ENCODE measurements at regions of chr16 and their contacts with region 1.

Region 1: GRCh38 chr16:56317998-56318826 is 107.1 kb downstream of the AMFR start:
- DNase-seq: peak; percentile 67 to 79 (median 72)
- H3K4me3 ChIP-seq: peak overlapping the region in 1 of 2 donors; percentile 25
- H3K4me3 Mint-ChIP-seq: peak overlapping the region; percentile 39 to 80 (median 57)
- H3K27ac ChIP-seq: no peak overlapping the region
- H3K27ac Mint-ChIP-seq: peak overlapping the region in 2 of 7 donors; percentile 32 to 36
- H3K4me1 ChIP-seq: peaks cover 6% of the 10 kb centered on the region
- H3K4me1 Mint-ChIP-seq: peaks cover 0 to 10% (median 8%) of the 10 kb centered on the region in 4 donors
- H3K27me3 ChIP-seq: no peaks in the 10 kb centered on the region
- H3K27me3 Mint-ChIP-seq: no peaks in the 10 kb centered on the region

Region 2: DNA sequence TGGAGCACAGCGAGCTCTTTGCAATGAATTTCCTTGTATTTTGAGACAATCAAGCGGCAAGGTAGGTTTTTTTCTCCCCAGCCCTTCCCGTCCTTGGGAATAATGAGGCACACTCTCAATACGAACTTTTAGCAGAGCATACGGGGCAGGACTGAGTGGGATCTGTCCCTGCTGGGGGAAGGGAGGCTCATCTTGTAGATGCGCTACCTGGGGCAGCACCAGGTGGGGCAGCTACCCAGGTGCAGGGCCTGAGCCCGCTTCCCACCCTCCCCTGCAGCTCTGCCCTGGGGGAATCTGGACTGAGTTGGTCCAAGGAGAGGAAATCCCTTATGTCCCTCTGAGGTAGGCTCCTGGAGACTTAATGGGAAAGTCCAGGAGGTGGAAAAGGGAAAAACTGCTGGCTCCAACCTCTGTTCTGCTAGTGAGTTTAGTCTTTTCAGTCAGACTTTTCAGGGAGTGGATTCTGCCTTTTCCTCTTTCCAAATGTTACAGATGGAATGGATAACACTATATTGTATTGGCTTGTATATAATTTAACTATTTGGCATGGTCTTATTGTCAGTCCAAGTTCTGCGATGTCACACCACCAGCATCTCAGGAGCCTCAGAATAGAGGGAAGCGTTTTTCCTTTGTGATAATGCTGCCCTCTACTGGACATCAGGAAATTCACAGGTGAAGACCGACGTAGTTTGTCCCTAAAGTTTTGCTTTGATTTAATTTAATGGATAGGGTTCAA is 475.7 kb before region 1 on chr16:
- CTCF ChIA-PET with region 1: interaction called, 5 read pairs
- POLR2A ChIA-PET with region 1: no interaction called
- intact Hi-C with region 1: loop called (anchors 1 kb)
- DNase-seq: peak in 4 of 5 donors; percentile 24 to 41 (median 34)
- H3K4me3 ChIP-seq: no peak overlapping the region
- H3K4me3 Mint-ChIP-seq: no peak overlapping the region
- H3K27ac ChIP-seq: no peak overlapping the region
- H3K27ac Mint-ChIP-seq: no peak overlapping the region
- H3K4me1 ChIP-seq: no peaks in the 10 kb centered on the region
- H3K4me1 Mint-ChIP-seq: peaks cover 0 to 4% (median 3%) of the 10 kb centered on the region in 4 donors
- H3K27me3 ChIP-seq: peaks cover 3% of the 10 kb centered on the region
- H3K27me3 Mint-ChIP-seq: peaks cover 11 to 13% of the 10 kb centered on the region in 2 donors

Region 3: GRCh38 chr16:55955845-55956244 is 362.4 kb before region 1 on chr16:
- CTCF ChIA-PET with region 1: interaction called, 12 read pairs
- POLR2A ChIA-PET with region 1: no interaction called
- intact Hi-C with region 1: no loop called
- DNase-seq: no peak
- H3K4me3 ChIP-seq: no peak overlapping the region
- H3K4me3 Mint-ChIP-seq: no peak overlapping the region
- H3K27ac ChIP-seq: no peak overlapping the region
- H3K27ac Mint-ChIP-seq: peak overlapping the region in 1 of 7 donors; percentile 44
- H3K4me1 ChIP-seq: no peaks in the 10 kb centered on the region
- H3K4me1 Mint-ChIP-seq: peaks cover 0 to 2% (median 0%) of the 10 kb centered on the region in 4 donors
- H3K27me3 ChIP-seq: no peaks in the 10 kb centered on the region
- H3K27me3 Mint-ChIP-seq: peaks cover 2 to 5% of the 10 kb centered on the region in 2 donors

Region 4: GRCh38 chr16:56075732-56076388 is 242.4 kb before region 1 on chr16:
- CTCF ChIA-PET with region 1: no interaction called
- POLR2A ChIA-PET with region 1: no interaction called
- intact Hi-C with region 1: no loop called
- DNase-seq: no peak
- H3K4me3 ChIP-seq: no peak overlapping the region
- H3K4me3 Mint-ChIP-seq: no peak overlapping the region
- H3K27ac ChIP-seq: no peak overlapping the region
- H3K27ac Mint-ChIP-seq: no peak overlapping the region
- H3K4me1 ChIP-seq: no peaks in the 10 kb centered on the region
- H3K4me1 Mint-ChIP-seq: no peaks in the 10 kb centered on the region
- H3K27me3 ChIP-seq: no peaks in the 10 kb centered on the region
- H3K27me3 Mint-ChIP-seq: peaks cover 3 to 6% of the 10 kb centered on the region in 2 donors

Region 5: DNA sequence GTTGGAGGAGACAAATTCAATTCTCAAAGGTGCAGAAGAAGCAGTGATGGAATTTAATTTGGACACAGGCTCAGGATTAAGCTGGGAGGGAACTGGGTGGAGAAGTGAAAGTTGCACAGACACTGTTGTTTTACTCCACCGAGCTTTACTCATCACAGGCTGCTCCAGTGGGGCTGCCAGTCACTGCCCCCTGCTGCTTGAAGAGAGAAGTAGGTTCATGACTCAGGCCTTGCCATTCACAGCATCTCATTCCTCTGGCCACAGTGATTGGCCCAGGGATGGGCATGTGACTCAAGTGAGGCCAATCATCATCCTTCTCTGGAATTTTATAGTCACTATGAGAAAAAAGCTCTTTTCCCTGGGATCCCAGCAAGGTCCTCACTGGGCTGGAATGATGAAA is 115.2 kb before region 1 on chr16:
- CTCF ChIA-PET with region 1: interaction called, 24 read pairs
- POLR2A ChIA-PET with region 1: no interaction called
- intact Hi-C with region 1: loop called (anchors 1 kb)
- DNase-seq: peak; percentile 55 to 70 (median 66)
- H3K4me3 ChIP-seq: no peak overlapping the region
- H3K4me3 Mint-ChIP-seq: no peak overlapping the region
- H3K27ac ChIP-seq: no peak overlapping the region
- H3K27ac Mint-ChIP-seq: no peak overlapping the region
- H3K4me1 ChIP-seq: peaks cover 57% of the 10 kb centered on the region
- H3K4me1 Mint-ChIP-seq: peaks cover 0 to 24% (median 9%) of the 10 kb centered on the region in 4 donors
- H3K27me3 ChIP-seq: no peaks in the 10 kb centered on the region
- H3K27me3 Mint-ChIP-seq: no peaks in the 10 kb centered on the region

Region 6: DNA sequence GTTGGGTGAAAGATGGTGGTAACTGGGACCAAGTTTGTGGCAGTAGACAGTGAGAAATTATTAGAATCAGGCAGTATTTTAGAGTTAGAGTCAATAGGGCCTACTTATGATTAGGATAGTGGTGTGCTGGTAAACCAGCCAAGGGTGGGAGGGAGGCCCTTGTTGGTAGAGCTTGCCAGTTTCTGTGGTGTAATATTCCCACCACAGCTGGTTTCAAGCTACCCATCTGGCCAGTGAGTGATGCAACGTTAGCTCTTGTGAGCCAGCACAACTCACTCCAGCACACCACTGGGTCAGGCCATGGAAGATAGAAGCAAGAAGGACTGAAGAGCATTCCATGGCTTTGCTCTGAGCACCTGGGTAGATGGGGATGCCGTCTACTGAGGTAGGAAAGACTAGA is 92.0 kb before region 1 on chr16:
- CTCF ChIA-PET with region 1: interaction called, 11 read pairs
- POLR2A ChIA-PET with region 1: no interaction called
- intact Hi-C with region 1: no loop called
- DNase-seq: no peak
- H3K4me3 ChIP-seq: no peak overlapping the region
- H3K4me3 Mint-ChIP-seq: peak overlapping the region in 7 of 8 donors; percentile 73 to 90 (median 84)
- H3K27ac ChIP-seq: no peak overlapping the region
- H3K27ac Mint-ChIP-seq: peak overlapping the region; percentile 73 to 94 (median 83)
- H3K4me1 ChIP-seq: peaks cover 38% of the 10 kb centered on the region
- H3K4me1 Mint-ChIP-seq: peaks cover 35 to 49% (median 41%) of the 10 kb centered on the region in 4 donors
- H3K27me3 ChIP-seq: no peaks in the 10 kb centered on the region
- H3K27me3 Mint-ChIP-seq: no peaks in the 10 kb centered on the region

Region 7: DNA sequence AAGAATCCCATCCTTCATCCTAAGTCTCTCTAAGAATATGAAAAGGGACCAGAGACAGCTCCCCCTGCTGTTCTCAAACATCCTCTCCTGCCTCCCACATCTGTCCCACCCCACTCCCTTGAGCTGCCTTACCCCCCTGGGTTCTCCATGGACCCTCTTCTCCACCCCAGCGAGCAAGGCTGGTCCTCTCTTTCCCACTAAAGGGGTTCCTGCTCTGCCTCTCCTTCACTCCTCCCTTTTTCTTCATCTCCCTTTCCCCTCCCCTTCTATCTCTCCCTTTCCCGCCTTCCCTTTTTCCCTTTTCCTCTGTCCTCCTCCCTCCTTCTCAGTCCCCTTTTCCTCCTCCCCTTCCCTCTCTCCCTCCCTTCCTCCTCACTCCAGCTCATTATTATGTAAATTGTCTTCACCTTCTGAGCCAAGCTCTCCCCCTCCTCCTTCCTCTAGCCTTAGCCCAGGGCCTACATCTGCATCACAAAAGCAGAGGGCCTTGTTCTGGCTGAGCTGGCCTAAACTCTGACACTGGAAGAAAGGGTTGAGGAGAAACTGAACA is 36.9 kb before region 1 on chr16:
- CTCF ChIA-PET with region 1: interaction called, 18 read pairs
- POLR2A ChIA-PET with region 1: no interaction called
- intact Hi-C with region 1: no loop called
- DNase-seq: no peak
- H3K4me3 ChIP-seq: no peak overlapping the region
- H3K4me3 Mint-ChIP-seq: no peak overlapping the region
- H3K27ac ChIP-seq: no peak overlapping the region
- H3K27ac Mint-ChIP-seq: peak overlapping the region in 4 of 7 donors; percentile 35 to 74 (median 58)
- H3K4me1 ChIP-seq: peaks cover 38% of the 10 kb centered on the region
- H3K4me1 Mint-ChIP-seq: peaks cover 26 to 44% (median 36%) of the 10 kb centered on the region in 4 donors
- H3K27me3 ChIP-seq: no peaks in the 10 kb centered on the region
- H3K27me3 Mint-ChIP-seq: no peaks in the 10 kb centered on the region

Region 8: DNA sequence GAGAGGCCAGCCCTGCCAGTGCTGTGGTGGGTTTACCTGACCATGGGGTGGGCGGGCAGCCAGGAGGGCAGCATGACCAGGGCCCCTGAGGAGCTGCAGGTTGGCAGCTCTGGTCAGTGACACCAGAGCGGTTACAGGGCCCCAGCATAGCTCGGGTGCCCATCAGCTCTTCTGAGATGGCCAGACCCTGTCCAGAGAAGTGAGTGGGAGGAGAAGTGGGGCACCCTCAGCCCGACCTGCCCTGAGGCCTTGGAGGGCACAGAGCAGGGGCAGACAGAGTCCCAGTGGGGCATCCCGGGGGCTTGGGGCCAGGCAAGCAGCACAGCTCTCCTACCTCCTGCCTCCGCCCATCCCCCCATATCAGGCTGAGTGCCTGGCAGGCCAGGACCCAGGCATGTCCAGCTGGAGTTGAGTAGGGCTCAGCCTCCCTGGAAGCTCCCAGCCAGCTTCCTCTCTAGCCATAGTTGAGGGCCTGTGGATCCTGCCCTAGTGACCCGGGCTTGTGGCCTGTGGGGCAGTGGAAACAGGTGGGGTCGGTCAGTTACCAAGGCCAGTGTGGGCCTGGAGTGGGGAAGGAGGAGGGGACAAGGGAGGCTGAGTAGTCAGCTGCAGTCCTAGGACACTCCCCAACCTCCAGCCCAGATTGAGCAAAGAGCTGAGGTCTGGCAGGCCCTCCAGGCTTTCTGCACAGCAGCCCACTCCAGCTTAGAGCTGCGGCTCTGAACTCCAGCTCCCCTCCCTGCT is 23.6 kb after region 1 on chr16:
- CTCF ChIA-PET with region 1: interaction called, 10 read pairs
- POLR2A ChIA-PET with region 1: no interaction called
- intact Hi-C with region 1: no loop called
- DNase-seq: no peak
- H3K4me3 ChIP-seq: no peak overlapping the region
- H3K4me3 Mint-ChIP-seq: no peak overlapping the region
- H3K27ac ChIP-seq: no peak overlapping the region
- H3K27ac Mint-ChIP-seq: no peak overlapping the region
- H3K4me1 ChIP-seq: no peaks in the 10 kb centered on the region
- H3K4me1 Mint-ChIP-seq: peaks cover 0 to 2% (median 0%) of the 10 kb centered on the region in 4 donors
- H3K27me3 ChIP-seq: no peaks in the 10 kb centered on the region
- H3K27me3 Mint-ChIP-seq: no peaks in the 10 kb centered on the region

Region 9: DNA sequence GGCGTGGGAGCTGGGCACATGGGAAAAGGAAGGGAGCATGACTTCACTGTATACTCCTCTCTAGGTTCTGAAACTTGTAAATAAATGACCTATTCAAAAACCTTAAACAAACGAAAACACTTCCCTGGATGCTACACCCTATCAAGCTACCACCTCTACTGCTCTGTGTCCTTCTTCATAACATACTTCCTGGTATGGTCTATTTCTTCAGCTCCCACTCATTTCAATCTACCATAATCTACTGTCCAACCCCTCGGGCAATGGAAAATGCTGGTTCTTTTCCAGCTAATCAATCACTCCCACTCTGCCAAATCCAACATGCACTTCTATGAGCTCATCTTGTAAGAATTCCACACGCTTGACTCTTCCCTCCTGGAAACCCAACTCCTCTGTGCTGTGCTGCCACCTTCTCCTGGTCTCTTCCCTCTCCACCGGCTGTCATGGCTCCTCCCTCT is 64.7 kb after region 1 on chr16:
- CTCF ChIA-PET with region 1: no interaction called
- POLR2A ChIA-PET with region 1: no interaction called
- intact Hi-C with region 1: no loop called
- DNase-seq: no peak
- H3K4me3 ChIP-seq: no peak overlapping the region
- H3K4me3 Mint-ChIP-seq: no peak overlapping the region
- H3K27ac ChIP-seq: no peak overlapping the region
- H3K27ac Mint-ChIP-seq: no peak overlapping the region
- H3K4me1 ChIP-seq: no peaks in the 10 kb centered on the region
- H3K4me1 Mint-ChIP-seq: peaks cover 0 to 7% (median 6%) of the 10 kb centered on the region in 4 donors
- H3K27me3 ChIP-seq: no peaks in the 10 kb centered on the region
- H3K27me3 Mint-ChIP-seq: no peaks in the 10 kb centered on the region

Measured in CD4-positive, alpha-beta memory T cell (primary cell).